ENCODE measurements at regions of chr3 and their contacts with region 1.

Region 1: DNA sequence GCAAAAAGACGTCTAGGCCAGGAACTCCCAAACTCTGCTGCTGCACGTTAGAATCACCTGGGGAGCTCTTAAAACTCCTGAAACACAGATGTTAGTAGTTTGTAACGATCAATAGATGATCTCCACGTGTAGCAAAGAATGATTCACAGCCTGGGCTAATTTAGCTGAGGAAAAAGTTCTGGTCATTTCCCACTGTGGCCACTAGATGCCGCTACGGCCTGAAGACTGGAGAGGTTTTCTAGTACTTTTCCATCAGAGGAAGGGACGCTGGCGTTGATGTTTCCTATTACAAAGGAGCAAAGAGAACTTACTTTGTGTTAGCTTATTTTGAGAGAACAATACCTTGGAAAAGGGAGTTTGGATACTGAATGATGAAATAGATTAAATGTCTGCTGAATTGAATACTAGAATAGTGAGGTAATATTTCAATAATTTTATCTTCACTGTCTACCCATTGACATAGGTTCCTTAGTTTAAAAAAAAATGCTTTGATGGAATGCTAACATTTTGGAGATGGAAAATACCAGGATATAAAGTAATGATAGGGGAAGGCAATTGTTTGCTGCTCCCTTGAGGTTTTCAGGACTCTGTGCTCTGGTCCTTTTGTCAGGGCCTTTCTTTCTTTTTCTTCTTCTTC is 159.1 kb downstream of the P3H2 start:
- DNase-seq: peak; percentile 85
- ATAC-seq: peak; percentile 58
- H3K4me3 Mint-ChIP-seq: no peak overlapping the region
- H3K27ac Mint-ChIP-seq: peak overlapping the region; percentile 64
- H3K4me1 Mint-ChIP-seq: peaks cover 23% of the 10 kb centered on the region
- H3K27me3 Mint-ChIP-seq: no peaks in the 10 kb centered on the region
- CTCF ChIP-seq: peak; percentile 89

Region 2: DNA sequence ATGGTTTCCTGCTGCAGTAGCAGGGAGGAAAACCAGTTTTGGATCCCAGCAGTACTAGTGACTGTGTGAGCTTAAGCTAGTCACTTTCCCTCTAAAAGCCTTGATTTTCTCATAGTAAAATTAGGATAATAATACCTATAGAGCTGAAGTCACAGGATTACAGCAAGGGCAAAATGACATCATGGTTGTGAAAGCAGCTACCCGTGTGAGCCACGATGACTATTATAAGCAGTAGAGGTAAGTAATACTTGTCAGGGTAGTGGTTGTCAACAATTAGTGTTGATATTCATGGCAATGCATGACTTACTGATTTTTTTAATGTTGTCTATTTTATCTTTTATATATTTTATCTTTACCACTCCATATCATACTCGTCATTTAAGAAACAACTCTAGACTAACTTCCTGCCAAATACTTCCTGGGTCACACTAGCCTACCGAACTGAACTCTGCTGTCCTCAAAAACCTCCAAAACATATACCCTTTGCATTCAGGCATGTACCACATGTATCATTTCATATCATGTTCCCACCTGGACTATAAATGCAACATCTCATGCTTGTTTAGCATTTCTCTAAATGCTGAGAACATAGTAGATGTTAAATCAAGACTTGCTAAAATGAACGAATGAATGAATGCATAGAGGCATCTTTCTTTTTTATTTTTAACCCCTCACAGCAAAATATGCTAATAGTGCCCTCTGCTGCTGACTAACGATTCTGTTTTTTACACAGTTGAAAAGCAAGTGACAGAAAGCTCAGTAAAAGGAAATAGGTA is 13.5 kb before region 1 on chr3:
- CTCF ChIA-PET with region 1: interaction called, 12 read pairs
- POLR2A ChIA-PET with region 1: no interaction called
- DNase-seq: no peak
- ATAC-seq: peak; percentile 55
- H3K4me3 Mint-ChIP-seq: no peak overlapping the region
- H3K27ac Mint-ChIP-seq: no peak overlapping the region
- H3K4me1 Mint-ChIP-seq: no peaks in the 10 kb centered on the region
- H3K27me3 Mint-ChIP-seq: no peaks in the 10 kb centered on the region
- CTCF ChIP-seq: peak; percentile 53

Region 3: DNA sequence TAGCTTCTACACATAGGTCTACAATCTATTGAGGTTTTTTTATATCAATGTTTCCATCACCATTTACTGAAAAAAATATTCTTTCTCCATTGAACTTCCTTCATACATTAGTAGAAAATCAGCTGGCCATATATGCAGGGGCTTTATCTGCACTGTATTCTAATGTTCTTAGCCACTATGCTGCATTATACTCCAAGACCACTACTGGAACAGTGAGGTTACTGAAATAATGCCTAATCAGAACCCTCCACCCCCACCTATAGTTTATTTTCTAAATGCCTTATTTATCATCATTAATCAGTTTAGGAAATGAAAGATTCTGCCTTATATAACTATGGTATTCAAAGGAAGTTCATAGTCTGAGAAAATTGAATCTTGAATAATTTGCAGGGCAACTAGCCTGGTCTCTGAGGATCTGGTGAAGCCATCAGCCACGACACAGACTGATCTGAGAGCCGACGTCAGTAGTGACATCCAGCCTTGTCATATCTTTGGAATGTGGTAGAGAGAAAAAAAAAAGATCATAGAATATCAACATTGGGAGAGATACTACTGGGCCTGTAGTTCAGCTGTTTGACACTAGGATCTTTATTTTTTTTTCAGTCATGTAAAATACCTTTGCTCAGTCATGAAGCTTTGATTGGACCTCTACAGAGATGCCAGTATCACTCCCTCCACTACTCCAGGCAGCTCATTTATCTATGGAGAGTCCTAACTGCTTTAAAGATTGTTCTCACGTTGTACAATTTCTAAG is 92.5 kb after region 1 on chr3:
- CTCF ChIA-PET with region 1: interaction called, 11 read pairs
- POLR2A ChIA-PET with region 1: no interaction called
- DNase-seq: no peak
- ATAC-seq: no peak
- H3K4me3 Mint-ChIP-seq: no peak overlapping the region
- H3K27ac Mint-ChIP-seq: peak overlapping the region; percentile 10; the same call in 1 of the 2 replicates
- H3K4me1 Mint-ChIP-seq: peaks cover 74% of the 10 kb centered on the region
- H3K27me3 Mint-ChIP-seq: no peaks in the 10 kb centered on the region
- CTCF ChIP-seq: no peak

Region 4: GRCh38 chr3:190205739-190206138 is 244.1 kb after region 1 on chr3:
- CTCF ChIA-PET with region 1: interaction called, 16 read pairs
- POLR2A ChIA-PET with region 1: no interaction called
- DNase-seq: no peak
- ATAC-seq: no peak
- H3K4me3 Mint-ChIP-seq: no peak overlapping the region
- H3K27ac Mint-ChIP-seq: no peak overlapping the region
- H3K4me1 Mint-ChIP-seq: no peaks in the 10 kb centered on the region
- H3K27me3 Mint-ChIP-seq: peaks cover 3% of the 10 kb centered on the region; the same call in 1 of the 2 replicates
- CTCF ChIP-seq: no peak

Region 5: DNA sequence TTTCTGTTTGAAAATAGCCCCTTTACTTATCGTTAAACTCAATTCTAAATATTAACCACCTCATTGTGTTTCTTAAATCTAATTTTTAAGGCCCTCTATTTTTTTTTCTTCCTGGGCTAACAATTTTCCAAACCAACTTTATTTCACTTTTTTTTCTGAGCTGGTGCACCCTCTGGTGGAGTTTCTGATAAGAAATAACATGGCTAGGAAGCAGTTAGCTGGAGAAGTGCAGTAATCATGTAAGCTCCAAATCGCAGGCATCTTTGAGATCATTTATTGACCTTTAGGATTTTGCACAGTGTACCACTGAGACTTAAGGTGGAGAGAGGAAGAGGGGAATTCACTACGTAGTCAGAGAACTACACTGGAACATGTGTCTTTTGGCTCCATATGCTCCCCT is 481.6 kb after region 1 on chr3:
- CTCF ChIA-PET with region 1: interaction called, 20 read pairs
- POLR2A ChIA-PET with region 1: no interaction called
- DNase-seq: no peak
- ATAC-seq: peak; percentile 34; the same call in 1 of the 2 replicates
- H3K4me3 Mint-ChIP-seq: no peak overlapping the region
- H3K27ac Mint-ChIP-seq: no peak overlapping the region
- H3K4me1 Mint-ChIP-seq: no peaks in the 10 kb centered on the region
- H3K27me3 Mint-ChIP-seq: no peaks in the 10 kb centered on the region
- CTCF ChIP-seq: no peak